Breast epithelium (tissue), 4 donors: ENCODE measurements at regions of chr2 and their contacts with region 1.

Region 1: DNA sequence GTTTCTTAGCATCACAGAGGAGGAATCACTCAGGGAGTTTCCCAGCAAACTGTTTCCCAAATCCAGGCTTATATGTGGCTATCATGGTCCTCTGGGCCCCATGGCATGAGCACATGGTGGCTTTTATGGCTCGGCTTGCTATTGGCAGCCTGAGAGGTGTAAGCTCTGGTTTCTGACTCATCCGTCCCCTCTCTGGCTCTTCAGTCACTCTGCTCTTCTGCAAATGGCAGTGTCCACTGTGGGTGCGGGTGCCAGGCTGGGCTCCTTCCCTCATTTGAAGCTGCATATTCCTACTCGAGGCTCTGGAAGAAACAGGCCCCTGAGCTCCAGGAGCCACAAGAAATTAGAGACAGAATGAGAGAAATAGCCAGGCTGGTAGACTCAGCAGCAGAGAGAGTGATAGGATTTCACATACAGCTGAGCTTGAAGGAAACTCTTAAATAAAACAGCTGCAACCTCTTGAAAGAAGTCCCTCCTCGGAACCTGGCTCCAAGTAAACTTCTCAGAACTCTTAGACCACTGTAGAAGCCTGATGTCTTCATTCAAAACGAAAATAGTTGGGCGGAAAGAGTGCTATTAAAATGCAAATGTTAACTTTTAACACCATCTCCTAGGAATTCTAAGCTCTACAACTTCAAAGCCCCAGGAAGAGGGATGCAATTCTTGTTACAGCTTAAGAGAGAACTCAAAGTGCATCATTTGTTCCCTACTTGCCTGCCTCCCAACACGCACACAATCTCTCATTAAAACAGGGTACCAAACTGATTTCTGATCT is 212.6 kb upstream of the SP5 start:
- DNase-seq: no peak
- H3K4me3 ChIP-seq: no peak overlapping the region
- H3K27ac ChIP-seq: peak overlapping the region in 1 of 2 donors; percentile 71
- H3K4me1 ChIP-seq: no peaks in the 10 kb centered on the region
- H3K27me3 ChIP-seq: no peaks in the 10 kb centered on the region
- CTCF ChIP-seq: no peak
- POLR2A ChIP-seq: no peak

Region 2: DNA sequence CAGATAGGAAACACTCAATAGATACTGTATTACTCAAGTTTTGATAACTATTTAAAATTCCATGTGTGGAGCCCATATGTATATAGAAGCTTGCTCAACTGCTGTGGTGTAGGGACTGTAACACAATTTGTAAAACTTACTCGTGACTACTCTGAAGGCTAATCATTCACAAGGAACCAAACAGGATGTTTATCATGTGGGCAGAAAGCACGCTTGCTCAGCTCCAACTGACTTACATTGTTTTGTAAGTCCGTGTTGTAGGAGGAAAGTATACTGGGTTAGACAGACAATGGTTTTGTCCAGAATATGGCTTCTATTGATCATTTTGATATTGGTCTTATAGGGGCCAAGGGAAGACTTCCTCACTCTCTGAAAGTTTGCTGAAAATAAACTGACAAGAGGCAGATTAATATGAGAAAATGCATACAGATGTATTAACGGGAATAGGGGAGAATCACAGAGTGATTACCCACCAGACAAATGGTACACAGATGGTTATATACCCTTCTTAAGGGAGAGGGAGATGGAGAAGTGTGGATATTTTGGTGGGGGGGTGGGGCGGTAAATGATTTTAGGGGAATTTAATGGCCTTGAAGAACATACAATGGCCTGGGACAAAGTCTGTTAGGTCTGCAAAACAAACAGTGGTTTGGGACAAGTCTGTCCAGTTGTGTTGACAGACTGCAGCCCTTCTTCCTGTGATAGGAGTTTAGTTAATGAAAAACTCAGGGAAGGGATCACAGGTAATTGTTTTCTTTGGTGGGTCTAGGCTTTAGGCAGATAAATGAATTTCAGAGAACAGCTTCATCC is 46.7 kb before region 1 on chr2:
- intact Hi-C with region 1: loop called (anchors 2 kb)
- DNase-seq: no peak
- H3K4me3 ChIP-seq: no peak overlapping the region
- H3K27ac ChIP-seq: no peak overlapping the region
- H3K4me1 ChIP-seq: no peaks in the 10 kb centered on the region
- H3K27me3 ChIP-seq: no peaks in the 10 kb centered on the region
- CTCF ChIP-seq: no peak
- POLR2A ChIP-seq: no peak